A549 (cell line): ENCODE measurements at regions of chr19 and their contacts with region 1.

Region 1: DNA sequence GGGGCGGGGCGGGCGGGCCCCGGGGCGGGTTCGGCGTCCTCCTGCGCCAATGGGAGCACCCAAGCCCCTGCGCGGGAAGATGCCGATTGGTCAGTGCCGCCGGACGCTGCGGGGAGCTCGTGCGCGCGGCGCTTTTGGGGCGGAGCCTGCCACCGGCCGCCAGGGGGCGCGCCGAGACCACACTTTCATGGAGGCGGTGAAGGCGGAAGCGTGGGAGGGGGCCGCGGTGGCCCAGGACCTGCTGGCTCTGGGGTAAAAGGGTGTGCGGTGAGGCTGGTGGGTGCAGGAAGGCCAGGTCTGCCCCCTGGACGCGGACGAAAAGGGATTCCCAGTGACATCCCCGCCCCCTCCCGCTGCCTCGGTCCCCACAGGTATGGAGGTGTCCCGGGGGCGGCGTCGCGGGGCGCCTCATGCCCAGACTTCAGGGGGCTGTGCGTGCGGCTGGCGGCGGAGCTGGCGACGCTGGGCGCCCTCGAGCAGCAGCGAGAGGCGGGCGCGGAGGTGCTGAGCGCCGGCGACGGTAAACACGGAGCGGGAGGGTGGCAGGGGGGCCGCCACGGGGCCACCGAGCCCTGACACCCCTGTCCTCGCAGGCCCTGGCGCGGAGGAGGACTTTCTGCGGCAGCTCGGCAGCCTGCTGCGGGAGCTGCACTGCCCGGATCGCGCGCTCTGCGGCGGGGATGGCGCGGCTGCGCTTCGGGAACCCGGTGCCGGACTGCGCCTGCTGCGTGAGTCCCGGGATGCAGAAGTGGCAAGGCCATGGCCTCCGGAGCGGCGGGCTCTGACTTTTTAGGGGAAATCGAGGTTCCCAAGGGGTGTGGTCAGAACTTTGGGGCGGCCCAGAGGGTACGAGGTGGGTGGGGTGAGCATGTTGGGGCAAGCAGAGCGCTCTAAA is at the start of gene FAM98C:
- DNase-seq: peak; percentile 99 to 100
- ATAC-seq: peak; percentile 93 to 98
- H3K4me3 ChIP-seq: peak within 1 kb of the TSS; percentile 66
- H3K27ac ChIP-seq: peak within 1 kb of the TSS; percentile 80 to 89
- H3K4me1 ChIP-seq: peaks cover 10% of the 10 kb centered on the region
- CTCF ChIP-seq: peak; percentile 100
- EP300 ChIP-seq: no peak
- POLR2A ChIP-seq: peak; percentile 72
- RAD21 ChIP-seq: peak; percentile 96 to 100
- polyA plus RNA-seq, gene FAM98C: 12.8 and 13.8 TPM in 2 replicates

Region 2: DNA sequence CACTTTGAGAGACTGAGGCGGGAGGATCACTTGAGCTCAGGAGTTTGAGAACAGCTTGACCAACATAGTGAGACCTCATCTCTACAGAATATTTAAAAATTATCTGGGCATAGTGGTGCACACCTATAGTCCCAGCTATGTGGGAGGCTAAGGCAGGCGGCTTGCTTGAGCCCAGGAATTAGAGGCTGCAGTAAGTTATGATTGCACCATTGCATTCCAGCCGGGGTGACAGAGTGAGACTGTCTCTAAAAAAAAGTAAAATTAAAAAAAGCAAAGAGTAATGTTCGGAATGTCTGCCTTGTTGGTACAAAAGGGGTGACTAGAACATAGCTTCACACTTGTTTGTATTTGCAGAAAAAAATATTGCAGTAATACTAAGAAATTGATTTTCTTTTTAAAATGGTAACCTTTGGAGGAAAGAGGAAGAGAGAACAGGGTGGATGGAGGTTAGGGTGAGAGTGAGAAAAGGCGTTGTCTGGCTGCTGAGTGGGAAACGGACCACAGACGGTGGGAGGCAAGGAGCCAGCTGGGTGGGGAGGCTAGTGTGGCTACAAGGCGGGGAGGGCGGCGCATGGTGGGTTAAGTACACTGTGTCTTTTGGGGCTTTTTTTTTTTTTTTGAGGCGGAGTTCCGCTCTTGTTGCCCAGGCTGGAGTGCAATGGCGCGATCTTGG is 157.3 kb before region 1 on chr19:
- CTCF ChIA-PET with region 1: interaction called, 14 read pairs
- POLR2A ChIA-PET with region 1: no interaction called
- DNase-seq: no peak
- ATAC-seq: no peak
- H3K4me3 ChIP-seq: no peak overlapping the region
- H3K27ac ChIP-seq: no peak overlapping the region
- H3K4me1 ChIP-seq: peaks cover 3% of the 10 kb centered on the region; the same call in 2 of the 3 replicates
- CTCF ChIP-seq: no peak
- EP300 ChIP-seq: no peak
- POLR2A ChIP-seq: no peak
- RAD21 ChIP-seq: no peak

Region 3: DNA sequence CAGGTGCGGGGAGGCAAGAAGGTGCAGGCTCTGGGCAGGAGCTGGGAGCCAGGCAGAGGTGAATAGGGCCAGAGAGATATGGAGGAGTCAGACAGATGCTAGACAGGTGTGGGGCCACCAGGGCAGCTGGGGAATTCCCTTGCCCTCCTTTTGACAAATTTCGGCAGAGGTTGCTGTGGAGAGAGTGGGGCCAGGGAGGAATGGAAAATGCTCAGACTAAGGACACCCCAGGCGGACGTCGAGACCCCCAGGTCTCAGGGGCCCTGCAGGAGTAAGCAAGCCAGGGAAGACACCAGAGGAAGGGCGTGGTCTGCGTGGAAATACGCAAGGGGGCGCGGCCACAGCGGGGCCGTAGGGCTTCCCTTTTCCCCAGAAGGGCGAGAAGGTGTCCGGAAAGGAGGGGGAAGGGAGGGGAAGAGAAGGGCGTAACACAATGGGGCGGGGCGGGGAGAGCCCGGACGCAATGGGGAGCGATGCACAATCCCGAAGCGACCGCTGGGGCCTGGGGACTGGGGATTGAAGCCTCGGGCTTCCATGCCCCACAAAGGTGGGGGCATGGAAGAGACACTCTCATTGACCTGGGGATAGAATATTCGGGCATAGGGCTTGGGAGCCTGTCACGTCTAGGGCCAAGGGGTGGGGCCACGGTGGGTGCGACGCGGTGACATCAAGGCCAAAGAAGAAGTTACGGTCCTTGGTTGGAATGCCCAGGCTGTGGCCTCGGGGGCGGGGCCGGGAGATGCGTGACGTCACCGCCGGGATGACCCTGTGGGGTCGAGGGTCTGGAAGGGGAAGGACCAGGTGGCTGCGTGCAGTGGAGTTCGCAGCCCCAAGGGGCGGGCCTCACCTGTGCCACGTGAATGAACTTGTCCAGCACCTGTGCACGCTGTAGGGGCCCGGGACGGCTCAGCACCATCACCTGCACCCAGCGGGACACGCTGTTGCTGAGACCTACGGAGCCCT is 14.6 kb after region 1 on chr19:
- CTCF ChIA-PET with region 1: interaction called, 153 read pairs
- POLR2A ChIA-PET with region 1: no interaction called
- DNase-seq: peak; percentile 74 to 92
- ATAC-seq: peak; percentile 77 to 86
- H3K4me3 ChIP-seq: peak overlapping the region; percentile 44
- H3K27ac ChIP-seq: peak overlapping the region; percentile 20 to 77; a peak in 5 of 6 replicates
- H3K4me1 ChIP-seq: peaks cover 9% of the 10 kb centered on the region; the same call in 2 of the 3 replicates
- CTCF ChIP-seq: no peak
- EP300 ChIP-seq: no peak
- POLR2A ChIP-seq: no peak
- RAD21 ChIP-seq: no peak

Region 4: GRCh38 chr19:38496603-38497487 is 93.6 kb after region 1 on chr19:
- CTCF ChIA-PET with region 1: interaction called, 57 read pairs
- POLR2A ChIA-PET with region 1: no interaction called
- DNase-seq: no peak
- ATAC-seq: no peak
- H3K4me3 ChIP-seq: no peak overlapping the region
- H3K27ac ChIP-seq: no peak overlapping the region
- H3K4me1 ChIP-seq: no peaks in the 10 kb centered on the region
- CTCF ChIP-seq: no peak
- EP300 ChIP-seq: no peak
- POLR2A ChIP-seq: no peak
- RAD21 ChIP-seq: no peak

Region 5: DNA sequence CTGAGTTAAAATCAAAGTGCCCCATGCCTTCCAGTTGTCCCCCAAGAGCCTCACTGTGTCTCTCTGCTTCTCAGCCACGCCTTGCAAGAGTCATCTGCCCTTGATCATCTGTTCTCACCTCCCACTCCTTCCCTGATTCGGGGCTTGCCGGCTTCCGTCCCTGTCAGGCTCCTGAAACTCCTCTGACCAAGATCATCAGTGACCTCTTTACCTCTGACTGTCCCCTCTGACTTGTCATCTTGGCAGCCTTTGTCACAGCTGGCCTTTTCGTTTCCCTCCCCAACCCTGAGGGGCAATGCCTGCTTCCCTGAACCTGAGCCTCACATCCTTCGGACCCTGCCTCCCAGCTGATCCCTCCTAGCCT is 148.2 kb after region 1 on chr19:
- CTCF ChIA-PET with region 1: interaction called, 15 read pairs
- POLR2A ChIA-PET with region 1: no interaction called
- DNase-seq: no peak
- ATAC-seq: peak in 1 of 2 experiments; percentile 30; a peak in 3 of 6 replicates
- H3K4me3 ChIP-seq: no peak overlapping the region
- H3K27ac ChIP-seq: no peak overlapping the region
- H3K4me1 ChIP-seq: no peaks in the 10 kb centered on the region
- CTCF ChIP-seq: no peak
- EP300 ChIP-seq: no peak
- POLR2A ChIP-seq: no peak
- RAD21 ChIP-seq: no peak

Region 6: DNA sequence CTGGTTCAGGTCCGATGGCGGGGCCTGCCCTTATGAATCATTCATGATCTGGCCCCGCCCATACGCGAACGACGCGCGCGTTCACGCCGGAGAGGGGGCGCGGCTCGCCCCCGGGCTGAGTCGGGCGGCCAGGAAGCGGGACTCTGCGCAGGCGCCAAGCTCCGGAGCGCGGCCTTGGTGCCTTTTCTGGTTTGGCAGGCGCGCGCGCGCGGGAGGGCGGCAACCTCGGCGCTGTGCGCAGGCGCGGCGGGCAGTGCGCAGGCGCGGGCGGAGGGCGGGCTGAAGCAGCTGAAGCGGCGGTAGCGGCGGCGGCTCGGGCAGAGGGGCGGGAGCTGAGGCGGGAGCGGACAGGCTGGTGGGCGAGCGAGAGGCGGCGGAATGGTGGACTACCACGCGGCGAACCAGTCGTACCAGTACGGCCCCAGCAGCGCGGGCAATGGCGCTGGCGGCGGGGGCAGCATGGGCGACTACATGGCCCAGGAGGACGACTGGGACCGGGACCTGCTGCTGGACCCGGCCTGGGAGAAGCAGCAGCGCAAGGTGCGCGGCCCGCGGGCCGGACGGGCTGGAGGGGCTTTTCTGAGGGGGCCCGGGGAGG is 244.3 kb after region 1 on chr19 and contains the start of gene ACTN4:
- CTCF ChIA-PET with region 1: interaction called, 172 read pairs
- POLR2A ChIA-PET with region 1: interaction called, 3 read pairs
- DNase-seq: peak; percentile 99
- ATAC-seq: peak; percentile 65 to 68
- H3K4me3 ChIP-seq: peak within 1 kb of the TSS; percentile 85
- H3K27ac ChIP-seq: peak within 1 kb of the TSS; percentile 87 to 91
- H3K4me1 ChIP-seq: peaks cover 38% of the 10 kb centered on the region
- CTCF ChIP-seq: no peak
- EP300 ChIP-seq: no peak; a peak in 1 of 5 replicates
- POLR2A ChIP-seq: peak; percentile 100
- RAD21 ChIP-seq: peak in 1 of 2 experiments; percentile 50; a peak in 2 of 5 replicates
- polyA plus RNA-seq, gene ACTN4: 605 and 614 TPM in 2 replicates

Region 7: DNA sequence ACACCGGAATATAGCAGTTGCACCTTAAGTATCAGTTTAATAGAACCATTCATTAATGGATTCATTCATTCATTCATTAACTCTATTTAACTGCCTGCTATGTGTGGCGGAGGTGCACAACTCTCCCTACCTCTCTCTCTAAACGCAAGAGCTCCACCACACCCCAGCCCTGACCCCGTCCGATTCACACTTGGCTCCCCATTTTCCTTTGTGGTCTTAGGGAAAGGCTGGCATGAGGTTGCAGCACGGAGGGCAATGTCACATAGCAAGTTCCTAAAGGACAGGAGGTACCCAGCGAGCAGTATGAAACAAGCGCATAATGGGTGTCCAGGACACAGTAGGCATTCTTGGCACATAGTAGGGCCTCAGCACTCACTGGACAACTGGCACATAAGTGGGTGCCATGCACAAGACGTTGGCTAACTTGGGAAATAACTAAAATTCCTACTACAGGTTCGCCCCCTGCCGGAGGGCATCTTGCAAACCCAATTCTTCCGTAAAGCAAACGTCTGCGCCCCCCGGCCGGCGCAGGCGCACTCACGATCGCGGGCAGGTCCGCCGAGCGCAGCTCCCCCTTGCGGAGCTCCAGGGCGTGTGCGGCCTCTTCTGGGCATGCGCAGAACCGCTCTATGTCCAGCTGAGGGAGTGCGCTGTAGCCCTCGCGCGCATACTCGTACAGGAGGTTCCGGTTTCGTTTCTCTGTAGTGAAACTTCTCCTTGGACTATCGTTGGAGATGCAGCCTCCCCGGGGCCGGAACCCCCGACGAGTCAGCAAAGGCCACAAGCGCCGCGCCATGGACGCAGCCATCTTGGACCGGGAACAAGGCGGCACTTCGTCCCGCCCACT is 526.9 kb after region 1 on chr19 and contains the start of gene SARS2:
- CTCF ChIA-PET with region 1: interaction called, 147 read pairs
- POLR2A ChIA-PET with region 1: interaction called, 30 read pairs
- DNase-seq: peak; percentile 98 to 99
- ATAC-seq: peak; percentile 65 to 69
- H3K4me3 ChIP-seq: peak within 1 kb of the TSS; percentile 66
- H3K27ac ChIP-seq: peak within 1 kb of the TSS; percentile 87
- H3K4me1 ChIP-seq: peaks cover 19% of the 10 kb centered on the region
- CTCF ChIP-seq: peak; percentile 100
- EP300 ChIP-seq: no peak
- POLR2A ChIP-seq: no peak
- RAD21 ChIP-seq: peak; percentile 88 to 98
- polyA plus RNA-seq, gene SARS2: 46.1 and 46.7 TPM in 2 replicates